Posterior cingulate gyrus (tissue), 11 donors: ENCODE measurements at regions of chrX and their contacts with region 1.

Region 1: DNA sequence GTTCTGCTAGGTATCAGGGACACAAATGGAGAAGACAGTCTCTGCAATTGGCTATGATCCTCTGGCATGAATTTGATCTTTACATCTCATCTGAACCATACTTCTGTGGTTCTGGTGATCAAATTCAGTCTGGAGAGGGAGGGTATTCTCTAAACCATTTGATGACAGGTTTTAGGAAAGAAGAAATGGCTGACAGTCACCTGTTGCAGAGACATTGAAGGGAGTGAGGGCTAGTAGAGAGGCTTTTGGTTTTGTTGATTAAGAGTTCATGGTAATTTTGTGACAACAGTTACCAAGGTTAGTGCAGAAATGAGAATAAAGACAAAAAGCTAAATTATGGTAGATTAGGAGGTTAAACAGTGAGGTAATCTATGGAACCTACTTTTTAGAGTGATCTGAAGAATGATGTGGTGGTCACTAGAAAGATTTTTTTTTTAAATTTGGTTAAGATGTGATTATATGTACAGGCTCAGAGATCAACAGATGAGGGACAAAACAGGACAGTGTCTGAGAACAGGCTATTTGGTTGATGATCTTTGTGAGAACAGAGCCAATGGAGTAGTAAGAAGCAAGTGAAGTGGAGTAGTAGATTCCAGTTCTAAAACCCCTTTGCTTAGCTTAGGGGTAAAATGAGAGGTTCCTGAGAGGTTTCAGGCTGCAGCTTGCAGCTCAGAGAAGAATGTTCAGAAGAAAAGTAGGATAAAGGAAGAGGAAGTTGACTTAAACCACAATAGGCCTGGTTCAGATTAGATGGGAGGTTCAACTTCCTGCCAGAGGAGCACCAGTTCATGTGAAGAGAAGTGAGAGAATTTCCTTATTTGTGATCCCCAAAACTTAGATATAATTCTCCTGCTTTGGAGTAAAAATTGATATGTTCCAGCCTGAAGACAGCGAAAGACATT is 34.7 kb downstream of the VSIG4 start:
- DNase-seq: no peak

Region 2: DNA sequence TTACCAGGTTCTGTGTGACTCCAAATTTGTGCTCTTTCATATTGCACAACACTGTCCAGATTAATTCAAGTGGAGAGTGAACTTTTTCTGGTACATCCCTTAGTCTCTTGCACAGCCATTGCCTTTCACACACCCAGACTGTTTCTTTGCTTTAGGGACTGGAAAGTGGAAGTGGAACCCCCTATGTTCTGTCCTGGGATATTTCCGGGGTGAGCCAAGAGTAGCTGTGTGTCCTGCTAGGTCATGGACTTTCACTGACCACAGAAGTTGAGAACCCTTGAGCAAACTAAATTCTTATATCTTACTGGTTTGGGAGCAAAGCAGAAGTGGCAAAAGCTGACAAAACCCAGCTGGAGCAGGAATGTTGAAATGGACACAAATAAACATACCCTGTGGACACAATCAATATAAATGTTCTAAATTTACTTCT is 45.0 kb after region 1 on chrX:
- intact Hi-C with region 1: loop called (anchors 5 kb)
- DNase-seq: peak in 1 of 10 donors; percentile 20